Mammary epithelial cell (primary cell): ENCODE measurements at regions of chr14 and their contacts with region 1.

Region 1: DNA sequence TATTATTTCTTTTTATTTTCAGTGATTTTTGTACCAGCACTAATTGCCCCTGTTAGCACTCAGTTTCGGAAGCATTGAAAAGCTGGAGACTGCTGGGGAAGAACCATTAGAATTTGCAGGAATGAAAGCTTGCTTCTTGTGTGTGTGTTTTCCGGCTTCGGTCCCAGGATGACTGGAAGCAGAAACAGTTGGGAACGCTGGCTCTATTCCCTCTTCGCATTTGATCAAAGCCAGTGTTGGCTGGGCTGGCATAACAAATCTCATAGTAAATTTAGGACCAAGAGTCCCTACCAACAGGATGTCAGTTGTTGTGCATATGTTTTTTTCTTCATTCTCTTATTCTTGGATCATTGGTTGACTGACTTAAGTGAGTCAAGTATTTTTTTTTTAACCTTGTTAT is 53.6 kb upstream of the TRAF3 start:
- DNase-seq: no peak
- H3K4me3 ChIP-seq: no peak overlapping the region
- H3K27ac ChIP-seq: no peak overlapping the region
- H3K4me1 ChIP-seq: no peaks in the 10 kb centered on the region
- H3K27me3 ChIP-seq: no peaks in the 10 kb centered on the region
- CTCF ChIP-seq: no peak

Region 2: DNA sequence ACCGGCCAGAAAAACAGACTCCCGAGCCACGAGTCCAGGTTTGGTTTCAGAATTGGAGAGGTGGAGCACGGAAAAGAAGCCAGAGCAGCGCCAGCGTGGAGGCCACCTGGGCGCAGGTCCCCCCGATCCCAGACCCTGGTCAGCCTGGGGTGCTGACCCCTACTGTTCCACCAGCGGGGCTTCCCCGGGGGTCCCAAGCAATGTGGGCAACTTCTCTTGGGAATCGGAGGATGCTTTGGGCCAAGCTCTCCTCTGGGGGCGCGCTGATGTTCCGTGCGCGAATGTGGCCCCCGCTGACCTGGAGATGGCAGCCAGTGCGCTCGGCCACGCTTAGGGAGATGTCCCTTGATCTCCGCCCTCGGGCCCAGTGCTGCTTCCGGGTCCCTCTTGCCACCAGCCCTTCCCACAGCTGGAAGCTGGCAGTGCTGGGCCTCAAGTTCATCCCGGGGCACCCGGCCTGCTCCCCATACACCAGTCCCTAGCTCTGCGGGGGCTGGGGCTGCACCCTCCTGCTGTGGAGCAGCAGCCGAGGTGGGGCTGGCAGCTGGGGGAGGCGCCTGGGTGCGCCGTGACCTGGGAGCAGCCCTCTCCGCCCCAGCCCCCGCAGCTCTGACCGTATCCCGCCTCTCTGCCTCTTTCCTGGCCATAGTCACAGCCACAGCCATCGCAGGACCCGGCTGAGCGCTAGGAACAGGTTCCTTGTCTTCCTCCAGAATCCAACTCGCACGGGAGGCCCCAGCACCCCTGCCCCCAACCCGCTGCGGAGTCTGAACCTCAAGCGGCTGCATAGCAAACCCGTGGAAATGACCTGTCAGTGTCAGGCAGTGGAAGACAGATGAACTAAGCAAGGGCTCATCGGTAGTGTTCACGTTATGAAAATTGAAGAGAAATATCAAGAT is 40.0 kb before region 1 on chr14:
- CTCF ChIA-PET with region 1: no interaction called
- dilution Hi-C with region 1: loop called (anchors 5 kb)
- in situ Hi-C with region 1: no loop called
- intact Hi-C with region 1: no loop called
- DNase-seq: no peak
- H3K4me3 ChIP-seq: no peak overlapping the region
- H3K27ac ChIP-seq: no peak overlapping the region
- H3K4me1 ChIP-seq: no peaks in the 10 kb centered on the region
- H3K27me3 ChIP-seq: no peaks in the 10 kb centered on the region
- CTCF ChIP-seq: no peak